Dendritic cell treated with granulocyte-macrophage colony-stimulating factor and Interleukin-4, amounts not matched to agents 40 ng/mL and 50 ng/mL, for 4 days (primary cell): ENCODE measurements at regions of chr2 and their contacts with region 1.

Region 1: DNA sequence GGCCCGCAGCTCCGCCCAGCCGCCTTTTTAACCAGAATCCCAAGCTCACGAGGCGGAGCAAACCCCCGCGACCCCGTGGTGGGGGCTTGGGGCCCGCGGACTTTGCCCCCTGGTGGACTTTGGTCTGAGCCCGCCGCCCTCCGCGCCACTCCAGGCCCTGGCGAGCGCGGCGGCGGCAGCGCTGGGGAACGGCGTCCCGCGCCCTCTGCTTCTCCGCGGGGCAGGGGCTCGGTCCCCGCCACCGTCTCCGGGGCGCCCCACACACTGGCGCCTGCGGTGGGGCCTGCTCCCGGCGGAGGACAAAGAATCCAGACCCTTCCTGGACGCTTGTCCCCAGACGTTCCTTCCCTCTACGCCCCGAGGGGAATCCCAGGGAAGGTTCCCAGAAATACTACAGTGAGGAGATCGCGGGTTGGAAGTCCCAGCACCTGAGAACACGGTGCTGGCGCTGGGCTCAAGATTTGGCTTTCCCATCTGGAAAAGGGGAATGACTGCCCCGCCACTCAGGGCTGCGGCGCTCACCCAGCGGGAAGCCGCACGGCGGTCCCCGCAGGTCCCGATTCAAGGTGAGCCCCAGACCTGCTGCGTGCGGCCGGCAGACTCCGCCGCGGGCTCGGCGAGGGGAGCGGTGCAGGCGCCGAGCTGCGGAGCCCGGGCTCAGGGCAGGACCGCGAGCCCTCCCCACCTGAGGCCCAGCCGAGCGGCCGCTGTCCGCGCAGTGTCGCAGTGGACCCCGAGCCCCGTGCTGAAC is at the start of gene HAAO:
- H3K4me3 Mint-ChIP-seq: peak within 1 kb of the TSS; percentile 93
- H3K27ac Mint-ChIP-seq: peak within 1 kb of the TSS; percentile 95
- H3K4me1 Mint-ChIP-seq: peaks cover 45% of the 10 kb centered on the region
- H3K27me3 Mint-ChIP-seq: no peaks in the 10 kb centered on the region

Region 2: GRCh38 chr2:41989501-41990180 is 803.1 kb before region 1 on chr2:
- intact Hi-C with region 1: no loop called
- H3K4me3 Mint-ChIP-seq: no peak overlapping the region
- H3K27ac Mint-ChIP-seq: no peak overlapping the region
- H3K4me1 Mint-ChIP-seq: no peaks in the 10 kb centered on the region
- H3K27me3 Mint-ChIP-seq: peaks cover 25% of the 10 kb centered on the region

Region 3: GRCh38 chr2:42513257-42513918 is 279.4 kb before region 1 on chr2:
- intact Hi-C with region 1: loop called (anchors 10 kb)
- H3K4me3 Mint-ChIP-seq: no peak overlapping the region
- H3K27ac Mint-ChIP-seq: no peak overlapping the region
- H3K4me1 Mint-ChIP-seq: peaks cover 13% of the 10 kb centered on the region
- H3K27me3 Mint-ChIP-seq: peaks cover 17% of the 10 kb centered on the region

Region 4: GRCh38 chr2:42754021-42754775 is 38.6 kb before region 1 on chr2:
- intact Hi-C with region 1: loop called (anchors 2 kb)
- H3K4me3 Mint-ChIP-seq: no peak overlapping the region
- H3K27ac Mint-ChIP-seq: peak overlapping the region; percentile 82
- H3K4me1 Mint-ChIP-seq: peaks cover 70% of the 10 kb centered on the region
- H3K27me3 Mint-ChIP-seq: peaks cover 36% of the 10 kb centered on the region

Region 5: DNA sequence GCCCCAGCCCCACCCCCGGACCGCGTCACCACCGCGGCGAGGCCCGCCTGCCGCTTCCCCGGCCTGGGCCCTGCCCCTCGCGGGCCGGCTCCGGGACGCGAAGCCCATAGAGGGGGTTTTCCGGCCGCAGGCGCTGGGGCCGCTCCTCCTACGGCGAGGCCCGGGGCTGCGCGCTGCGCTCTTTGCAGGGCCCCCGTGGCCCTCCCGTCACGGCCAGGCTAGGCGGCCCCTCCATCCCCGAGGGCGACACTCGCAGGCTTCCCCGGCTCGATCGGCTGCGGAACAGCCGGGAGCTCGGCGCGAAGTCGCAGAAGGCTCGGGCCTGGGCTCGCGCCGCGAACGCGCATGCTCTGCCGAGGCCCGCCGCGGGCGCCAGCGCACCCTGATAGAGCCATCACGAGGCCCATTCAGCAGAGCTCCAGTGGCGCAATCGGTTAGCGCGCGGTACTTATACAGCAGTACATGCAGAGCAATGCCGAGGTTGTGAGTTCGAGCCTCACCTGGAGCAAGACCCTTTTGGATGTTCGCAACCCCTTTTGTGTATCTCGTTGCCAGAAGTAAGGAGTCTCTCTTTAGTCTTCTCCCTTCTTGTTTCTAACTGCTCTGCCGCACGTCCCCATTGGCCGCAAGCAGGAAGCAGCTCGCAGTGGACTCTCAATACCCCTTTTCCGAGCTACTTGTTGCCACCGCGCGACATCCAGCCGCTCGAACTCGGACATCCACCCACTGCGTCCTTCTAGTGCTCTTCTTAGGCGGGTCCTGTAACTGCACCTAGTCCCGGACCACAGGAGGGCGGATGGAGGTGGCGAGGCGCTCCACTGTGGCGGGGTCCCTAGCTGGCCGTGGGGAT is 17.6 kb after region 1 on chr2:
- intact Hi-C with region 1: loop called (anchors 2 kb)
- H3K4me3 Mint-ChIP-seq: peak overlapping the region; percentile 80
- H3K27ac Mint-ChIP-seq: peak overlapping the region; percentile 99
- H3K4me1 Mint-ChIP-seq: peaks cover 46% of the 10 kb centered on the region
- H3K27me3 Mint-ChIP-seq: no peaks in the 10 kb centered on the region

Region 6: DNA sequence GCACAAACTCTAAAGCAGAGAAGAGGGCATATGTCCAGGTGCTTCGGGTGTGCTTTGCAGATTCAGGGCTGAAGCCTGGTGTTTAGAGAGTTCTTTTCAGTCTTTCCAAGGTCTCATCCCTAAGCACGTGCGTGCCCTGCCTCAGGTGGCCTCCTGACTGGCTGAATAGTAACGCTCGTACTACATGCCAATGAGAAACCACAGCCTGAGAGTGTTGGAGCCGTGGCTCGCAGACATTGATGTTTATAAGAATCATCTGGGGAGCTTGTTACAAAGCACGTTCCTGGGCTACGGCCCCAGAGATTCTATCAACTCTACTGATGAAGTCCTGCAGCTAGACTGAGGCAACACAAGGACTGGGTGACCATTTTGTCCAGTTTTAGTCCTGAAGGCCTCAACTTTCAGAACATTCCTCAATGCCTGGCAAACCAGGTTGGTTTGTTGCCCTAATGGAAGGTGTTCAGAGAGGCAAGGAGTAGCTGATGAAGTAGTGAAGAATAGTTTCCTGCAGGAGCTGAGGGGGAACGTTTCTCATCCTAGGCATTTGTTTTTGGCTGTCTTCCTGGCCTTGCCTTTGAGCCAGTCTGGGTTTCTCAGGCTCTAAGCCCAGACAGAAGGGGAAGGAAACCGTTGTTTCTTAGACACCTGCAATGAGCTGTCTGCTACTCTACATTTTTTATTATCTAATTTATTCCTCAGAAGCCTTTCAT is 31.1 kb after region 1 on chr2:
- intact Hi-C with region 1: no loop called
- H3K4me3 Mint-ChIP-seq: no peak overlapping the region
- H3K27ac Mint-ChIP-seq: no peak overlapping the region
- H3K4me1 Mint-ChIP-seq: peaks cover 21% of the 10 kb centered on the region
- H3K27me3 Mint-ChIP-seq: peaks cover 16% of the 10 kb centered on the region